Heart left ventricle (tissue), 16 donors: ENCODE measurements at regions of chr16 and their contacts with region 1.

Region 1: GRCh38 chr16:48556913-48557351 is 53.0 kb downstream of the N4BP1 start:
- DNase-seq: no peak
- ATAC-seq: peak in 2 of 4 donors; percentile 38 to 63
- H3K4me3 ChIP-seq: no peak overlapping the region
- H3K27ac ChIP-seq: peak overlapping the region in 1 of 12 donors; percentile 79
- H3K4me1 ChIP-seq: peaks cover 13 to 100% (median 77%) of the 10 kb centered on the region in 12 donors
- H3K27me3 ChIP-seq: no peaks in the 10 kb centered on the region
- CTCF ChIP-seq: no peak
- POLR2A ChIP-seq: no peak

Region 2: DNA sequence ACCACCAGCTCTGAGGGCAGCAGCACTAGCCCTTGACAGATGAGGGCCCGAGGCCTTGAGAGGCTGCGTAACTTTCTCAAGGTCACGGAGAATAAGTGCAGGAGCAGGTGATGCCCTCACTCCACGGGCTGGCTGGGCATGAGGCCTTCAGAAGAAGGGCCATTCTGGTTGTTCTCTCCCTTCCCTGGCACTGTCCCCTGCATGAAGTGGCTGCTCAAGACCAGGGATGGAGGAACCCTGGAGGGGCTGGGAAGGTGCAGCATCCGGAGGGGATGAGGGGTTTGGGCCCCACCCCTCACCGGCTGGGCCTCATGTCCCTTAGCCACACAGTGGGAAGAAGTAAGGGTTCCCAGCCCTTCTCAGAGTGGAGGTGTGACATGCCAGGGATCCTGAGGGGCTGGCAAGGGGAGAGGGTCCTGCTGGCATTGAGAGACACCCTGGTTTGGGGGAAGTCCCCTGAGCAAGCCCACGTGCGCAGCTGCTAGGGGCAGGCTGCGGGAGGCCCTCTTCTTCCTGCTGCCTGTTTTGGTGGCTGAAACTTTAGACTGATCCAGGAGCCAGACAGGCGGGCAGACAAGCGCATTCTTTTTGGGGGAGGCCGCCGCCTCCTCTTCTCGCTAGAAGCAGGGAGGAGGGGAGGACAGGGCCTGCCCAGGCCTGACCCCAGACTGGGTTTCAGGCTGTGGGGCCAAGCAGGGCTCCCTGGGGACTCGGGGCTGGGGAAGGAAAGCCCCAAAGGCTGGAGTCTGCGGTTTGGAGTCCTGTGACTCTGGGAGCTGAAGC is 20.9 kb before region 1 on chr16:
- intact Hi-C with region 1: no loop called
- DNase-seq: peak; percentile 67 to 89 (median 72)
- ATAC-seq: peak; percentile 30 to 49 (median 40)
- H3K4me3 ChIP-seq: peak overlapping the region in 2 of 12 donors; percentile 1
- H3K27ac ChIP-seq: peak overlapping the region; percentile 38 to 89 (median 66)
- H3K4me1 ChIP-seq: peaks cover 14 to 57% (median 37%) of the 10 kb centered on the region in 12 donors
- H3K27me3 ChIP-seq: no peaks in the 10 kb centered on the region
- CTCF ChIP-seq: no peak
- POLR2A ChIP-seq: no peak

Region 3: DNA sequence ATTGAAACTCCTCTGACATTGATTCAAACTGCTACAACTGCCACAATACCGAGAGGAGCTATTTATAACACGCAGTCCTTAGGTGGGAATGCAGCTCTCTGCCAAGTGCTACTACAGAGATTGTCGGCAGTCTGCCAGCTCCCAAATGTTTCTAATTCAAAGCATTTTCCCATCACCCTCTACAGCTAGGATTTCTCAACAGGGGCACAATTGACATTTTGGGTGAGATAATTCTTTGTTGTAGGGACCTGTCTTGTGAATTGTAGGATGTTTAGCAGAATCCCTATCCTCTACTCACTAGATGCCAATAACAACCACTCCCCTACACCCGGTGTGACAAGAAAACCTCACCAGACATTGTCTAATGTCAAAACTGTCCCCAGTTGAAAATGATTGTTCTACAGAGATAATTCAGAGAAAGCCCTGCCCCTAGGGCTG is 60.8 kb after region 1 on chr16:
- intact Hi-C with region 1: loop called in 2 of 10 experiments (anchors 2 to 5 kb)
- DNase-seq: peak in 4 of 5 donors; percentile 76 to 88 (median 80)
- ATAC-seq: peak; percentile 62 to 84 (median 72)
- H3K4me3 ChIP-seq: peak overlapping the region in 5 of 12 donors; percentile 10 to 41 (median 29)
- H3K27ac ChIP-seq: peak overlapping the region; percentile 9 to 87 (median 64)
- H3K4me1 ChIP-seq: peaks cover 0 to 62% (median 38%) of the 10 kb centered on the region in 12 donors
- H3K27me3 ChIP-seq: no peaks in the 10 kb centered on the region
- CTCF ChIP-seq: no peak
- POLR2A ChIP-seq: no peak